ENCODE measurements at regions of chr10 and their contacts with region 1.

Region 1: DNA sequence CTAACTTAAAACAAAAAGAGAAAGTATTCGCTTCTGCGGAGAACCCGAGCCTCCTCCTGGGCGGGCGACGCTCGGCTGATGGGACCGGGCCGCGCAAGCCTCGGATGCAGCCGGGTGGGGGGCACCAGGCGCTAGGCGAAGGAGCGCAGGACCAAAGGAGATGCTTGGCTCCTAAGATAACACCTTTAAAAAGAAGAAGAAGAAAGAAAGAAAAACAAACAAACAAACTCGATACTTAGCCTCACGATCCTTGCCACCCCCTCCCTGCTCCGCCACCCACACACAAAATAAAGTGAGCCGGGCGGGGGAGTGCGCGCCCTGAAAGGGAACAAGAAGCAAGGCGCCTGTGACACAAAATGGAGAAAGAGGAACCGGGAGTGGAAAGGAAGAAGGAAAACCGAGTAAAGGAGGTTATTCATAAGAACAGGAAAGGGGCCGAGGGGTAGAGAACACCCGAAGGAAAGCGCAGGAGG is 34.0 kb upstream of the EBLN1 start:
- DNase-seq: peak; percentile 64 to 79
- ATAC-seq: peak; percentile 54 to 82 (median 68)
- H3K4me3 ChIP-seq: peak overlapping the region; percentile 43 to 85 (median 76)
- H3K27ac ChIP-seq: peak overlapping the region; percentile 96 to 99 (median 98)
- H3K4me1 ChIP-seq: peaks cover 0 to 37% (median 12%) of the 10 kb centered on the region in 9 donors
- H3K27me3 ChIP-seq: peaks cover 0 to 13% (median 0%) of the 10 kb centered on the region in 7 donors
- CTCF ChIP-seq: no peak

Region 2: DNA sequence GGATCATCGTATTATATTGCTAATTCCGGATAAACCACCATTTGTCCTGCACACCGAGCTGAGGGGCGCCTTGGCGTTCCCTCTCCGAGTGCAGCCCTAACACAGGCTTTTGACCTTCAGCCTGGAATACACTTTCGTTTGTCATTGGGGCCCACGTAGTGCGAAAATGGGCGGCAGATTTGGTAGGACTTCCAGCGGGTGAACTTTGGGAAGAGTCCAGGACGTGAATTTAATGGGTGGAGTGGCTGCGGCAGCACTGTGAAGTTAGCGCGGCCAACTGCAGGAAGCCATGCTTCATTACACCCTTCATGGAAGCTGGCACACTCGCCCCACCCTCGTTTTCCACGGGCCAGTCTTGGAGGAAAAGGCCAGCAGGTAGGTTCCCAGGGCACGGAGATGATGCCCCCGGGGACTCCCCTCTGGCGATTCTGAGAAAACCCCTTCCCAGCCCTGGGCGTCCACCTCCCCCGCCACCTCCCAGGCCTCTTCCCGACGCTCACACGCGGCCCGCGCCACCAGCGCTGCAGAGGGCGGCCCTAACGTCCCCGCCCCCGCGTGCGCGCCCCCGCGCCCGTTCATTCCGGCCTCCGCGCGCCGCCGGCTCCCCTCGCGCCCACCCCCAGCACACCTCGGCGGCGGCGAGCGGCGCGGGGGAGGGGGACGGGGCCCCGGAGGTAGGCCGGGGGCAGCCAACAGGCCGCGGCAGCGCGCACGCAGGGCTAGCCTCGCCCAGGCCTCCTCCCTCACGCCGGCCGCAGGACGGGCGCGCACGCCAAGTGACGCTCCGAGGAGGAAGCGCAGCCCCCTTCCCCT is 718.1 kb before region 1 on chr10 and contains the start of gene MLLT10:
- intact Hi-C with region 1: loop called in 1 of 10 experiments (anchors 10 kb)
- DNase-seq: peak; percentile 94 to 96
- ATAC-seq: peak; percentile 94 to 97 (median 96)
- H3K4me3 ChIP-seq: peak within 1 kb of the TSS; percentile 72 to 88 (median 80)
- H3K27ac ChIP-seq: peak within 1 kb of the TSS; percentile 76 to 99 (median 98)
- H3K4me1 ChIP-seq: peaks cover 0 to 44% (median 27%) of the 10 kb centered on the region in 9 donors
- H3K27me3 ChIP-seq: no peaks in the 10 kb centered on the region
- CTCF ChIP-seq: peak in 5 of 9 donors; percentile 8 to 37 (median 21)
- total RNA-seq, gene MLLT10: 18.9 to 28.4 (median 24.6) TPM

Region 3: GRCh38 chr10:22228943-22229801 is 22.6 kb before region 1 on chr10:
- intact Hi-C with region 1: loop called in 3 of 10 experiments (anchors 1 to 2 kb)
- DNase-seq: peak; percentile 83 to 91
- ATAC-seq: peak; percentile 98 to 100 (median 98)
- H3K4me3 ChIP-seq: peak overlapping the region; percentile 53 to 81 (median 76)
- H3K27ac ChIP-seq: peak overlapping the region; percentile 84 to 95 (median 92)
- H3K4me1 ChIP-seq: peaks cover 0 to 14% (median 8%) of the 10 kb centered on the region in 9 donors
- H3K27me3 ChIP-seq: no peaks in the 10 kb centered on the region
- CTCF ChIP-seq: no peak

Region 4: DNA sequence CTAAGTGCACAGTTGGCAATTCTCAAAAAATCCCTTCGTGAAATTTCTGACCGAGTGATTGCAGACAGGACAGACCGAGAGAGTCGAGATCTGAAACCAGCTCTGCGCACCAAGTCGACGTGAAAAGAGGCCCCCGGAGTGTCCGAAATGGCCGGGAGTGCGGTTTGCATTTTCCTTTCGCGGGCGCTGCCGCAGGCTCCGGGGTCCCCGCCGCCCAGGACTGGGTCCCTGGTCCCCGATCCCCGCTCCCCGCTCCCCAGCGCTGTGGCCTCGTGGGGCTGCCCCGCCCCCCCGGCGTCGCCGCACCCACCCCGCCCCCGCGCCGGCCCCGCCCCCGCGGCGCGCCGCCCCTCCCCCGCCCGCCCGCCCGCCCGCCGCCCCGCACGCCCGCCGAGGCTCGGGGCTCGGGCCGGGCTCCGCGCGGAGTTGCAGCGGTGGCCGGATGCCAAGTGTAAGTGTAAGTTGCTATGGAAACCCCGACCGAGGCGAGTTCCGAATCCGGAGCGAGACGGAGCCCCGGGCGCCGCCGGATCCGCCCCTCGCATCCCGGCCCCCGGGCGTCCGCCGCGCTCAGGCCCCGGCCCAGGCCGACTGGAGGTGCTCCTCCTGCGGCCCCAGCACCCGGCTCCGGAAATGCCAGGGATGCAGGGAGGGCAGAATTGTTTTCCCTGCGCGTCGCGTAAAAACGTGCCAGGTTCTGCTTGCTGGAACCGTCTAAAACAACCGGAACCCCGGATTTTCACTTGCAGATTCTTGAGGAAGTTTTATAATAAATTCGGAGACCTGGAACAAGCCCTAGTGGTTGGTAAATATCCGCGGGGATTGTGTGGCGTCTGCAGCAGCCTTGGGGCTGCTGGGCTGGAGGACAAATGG is 73.7 kb after region 1 on chr10:
- intact Hi-C with region 1: loop called in 1 of 10 experiments (anchors 2 kb)
- DNase-seq: peak; percentile 77 to 80
- ATAC-seq: peak; percentile 32 to 66 (median 52)
- H3K4me3 ChIP-seq: peak overlapping the region; percentile 29 to 72 (median 64)
- H3K27ac ChIP-seq: peak overlapping the region in 9 of 10 donors; percentile 45 to 78 (median 59)
- H3K4me1 ChIP-seq: peaks cover 3 to 41% (median 35%) of the 10 kb centered on the region in 9 donors
- H3K27me3 ChIP-seq: peaks cover 0 to 33% (median 5%) of the 10 kb centered on the region in 7 donors
- CTCF ChIP-seq: peak in 2 of 9 donors; percentile 9 to 11

Region 5: DNA sequence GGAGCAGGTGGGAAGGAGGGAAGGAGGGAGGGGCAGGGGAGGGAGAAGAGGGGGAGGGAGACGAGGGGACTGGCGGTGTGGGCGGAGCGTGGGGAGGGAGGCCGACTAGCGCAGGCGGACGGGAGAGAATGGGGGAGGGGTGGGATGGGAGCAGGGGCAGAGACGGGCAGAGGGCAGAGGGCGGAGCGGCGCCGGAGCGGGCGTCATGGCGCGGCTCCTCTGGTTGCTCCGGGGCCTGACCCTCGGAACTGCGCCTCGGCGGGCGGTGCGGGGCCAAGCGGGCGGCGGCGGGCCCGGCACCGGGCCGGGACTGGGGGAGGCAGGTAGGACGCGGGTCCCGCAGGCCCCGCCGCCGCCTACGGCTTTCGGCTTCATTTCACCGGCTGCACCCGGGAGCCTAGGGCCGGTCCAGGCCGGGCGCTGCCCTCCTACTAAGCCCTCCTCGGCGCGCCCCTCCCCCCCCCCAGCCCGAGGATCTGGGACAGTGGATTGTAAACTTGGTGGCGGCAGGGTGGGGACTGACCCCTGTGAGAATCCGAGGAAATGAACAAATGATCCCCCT is 843.7 kb after region 1 on chr10 and contains the start of gene MSRB2:
- intact Hi-C with region 1: loop called in 1 of 10 experiments (anchors 10 kb)
- DNase-seq: peak; percentile 93 to 96
- ATAC-seq: peak; percentile 89 to 93 (median 92)
- H3K4me3 ChIP-seq: peak within 1 kb of the TSS; percentile 44 to 93 (median 82)
- H3K27ac ChIP-seq: peak within 1 kb of the TSS; percentile 86 to 98 (median 96)
- H3K4me1 ChIP-seq: peaks cover 0 to 47% (median 40%) of the 10 kb centered on the region in 9 donors
- H3K27me3 ChIP-seq: no peaks in the 10 kb centered on the region
- CTCF ChIP-seq: no peak
- total RNA-seq, gene MSRB2: 151 to 199 (median 175) TPM

Measured in heart right ventricle (tissue), 16 donors.